ENCODE measurements at regions of chr13 and their contacts with region 1.

Region 1: DNA sequence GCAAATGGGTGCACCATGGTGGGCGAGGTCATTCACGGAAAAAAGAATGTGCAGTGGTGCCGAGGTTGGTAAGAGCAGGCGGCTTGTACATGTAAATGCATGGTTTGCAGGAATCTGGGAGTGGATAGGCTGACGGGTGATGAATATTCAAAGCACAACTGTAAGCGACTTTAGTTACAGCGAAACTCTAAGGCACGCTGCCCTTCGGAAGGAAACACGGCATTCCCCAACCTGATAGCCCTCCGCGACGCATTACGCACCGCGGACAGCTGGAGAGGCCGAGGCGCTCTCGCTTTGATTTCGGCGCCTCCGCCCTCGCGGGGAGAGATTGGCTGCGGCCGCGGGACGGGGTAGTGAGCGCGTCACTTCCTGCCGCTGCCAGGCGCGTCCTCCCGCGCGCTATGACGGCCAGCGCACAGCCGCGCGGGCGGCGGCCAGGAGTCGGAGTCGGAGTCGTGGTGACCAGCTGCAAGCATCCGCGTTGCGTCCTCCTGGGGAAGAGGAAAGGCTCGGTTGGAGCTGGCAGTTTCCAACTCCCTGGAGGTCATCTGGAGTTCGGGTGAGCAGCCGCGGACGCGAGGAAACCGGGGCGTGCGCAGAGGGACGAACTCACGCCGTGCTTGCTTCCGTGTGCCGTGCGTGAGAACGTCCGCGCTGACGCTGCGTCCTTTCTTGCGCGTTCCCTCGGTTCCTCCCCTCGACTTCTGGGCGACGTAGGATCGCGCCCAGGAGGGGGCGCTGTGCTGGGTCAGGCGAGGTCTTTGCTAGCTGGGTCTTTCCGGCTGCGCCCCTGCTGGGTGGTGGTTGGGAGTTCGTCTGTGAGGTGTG is at the start of gene NUDT15:
- DNase-seq: peak; percentile 96 to 97 (median 97)
- H3K4me3 ChIP-seq: peak within 1 kb of the TSS; percentile 83 to 87
- H3K4me3 Mint-ChIP-seq: peak within 1 kb of the TSS; percentile 87 to 96 (median 93)
- H3K27ac ChIP-seq: peak within 1 kb of the TSS; percentile 94
- H3K27ac Mint-ChIP-seq: peak within 1 kb of the TSS; percentile 95 to 99 (median 97)
- H3K4me1 ChIP-seq: peaks cover 24% of the 10 kb centered on the region
- H3K4me1 Mint-ChIP-seq: peaks cover 13 to 32% (median 27%) of the 10 kb centered on the region in 4 donors
- H3K27me3 ChIP-seq: no peaks in the 10 kb centered on the region
- H3K27me3 Mint-ChIP-seq: no peaks in the 10 kb centered on the region
- total RNA-seq, gene NUDT15: 5.6 to 6.3 TPM

Region 2: GRCh38 chr13:46553886-46554858 is 1483.4 kb before region 1 on chr13:
- CTCF ChIA-PET with region 1: no interaction called
- POLR2A ChIA-PET with region 1: no interaction called
- intact Hi-C with region 1: loop called (anchors 5 kb)
- DNase-seq: peak; percentile 70 to 85 (median 75)
- H3K4me3 ChIP-seq: peak overlapping the region; percentile 67 to 87
- H3K4me3 Mint-ChIP-seq: peak overlapping the region; percentile 94 to 98 (median 96)
- H3K27ac ChIP-seq: peak overlapping the region; percentile 79
- H3K27ac Mint-ChIP-seq: peak overlapping the region; percentile 92 to 97 (median 94)
- H3K4me1 ChIP-seq: peaks cover 38% of the 10 kb centered on the region
- H3K4me1 Mint-ChIP-seq: peaks cover 38 to 63% (median 45%) of the 10 kb centered on the region in 4 donors
- H3K27me3 ChIP-seq: no peaks in the 10 kb centered on the region
- H3K27me3 Mint-ChIP-seq: peaks cover under 1 to 1% of the 10 kb centered on the region in 2 donors

Region 3: GRCh38 chr13:48050550-48050949 is 13.0 kb after region 1 on chr13:
- CTCF ChIA-PET with region 1: interaction called, 49 read pairs
- POLR2A ChIA-PET with region 1: interaction called, 11 read pairs
- intact Hi-C with region 1: no loop called
- DNase-seq: no peak
- H3K4me3 ChIP-seq: no peak overlapping the region
- H3K4me3 Mint-ChIP-seq: no peak overlapping the region
- H3K27ac ChIP-seq: no peak overlapping the region
- H3K27ac Mint-ChIP-seq: peak overlapping the region in 4 of 7 donors; percentile 5 to 50 (median 23)
- H3K4me1 ChIP-seq: no peaks in the 10 kb centered on the region
- H3K4me1 Mint-ChIP-seq: no peaks in the 10 kb centered on the region
- H3K27me3 ChIP-seq: no peaks in the 10 kb centered on the region
- H3K27me3 Mint-ChIP-seq: no peaks in the 10 kb centered on the region

Region 4: DNA sequence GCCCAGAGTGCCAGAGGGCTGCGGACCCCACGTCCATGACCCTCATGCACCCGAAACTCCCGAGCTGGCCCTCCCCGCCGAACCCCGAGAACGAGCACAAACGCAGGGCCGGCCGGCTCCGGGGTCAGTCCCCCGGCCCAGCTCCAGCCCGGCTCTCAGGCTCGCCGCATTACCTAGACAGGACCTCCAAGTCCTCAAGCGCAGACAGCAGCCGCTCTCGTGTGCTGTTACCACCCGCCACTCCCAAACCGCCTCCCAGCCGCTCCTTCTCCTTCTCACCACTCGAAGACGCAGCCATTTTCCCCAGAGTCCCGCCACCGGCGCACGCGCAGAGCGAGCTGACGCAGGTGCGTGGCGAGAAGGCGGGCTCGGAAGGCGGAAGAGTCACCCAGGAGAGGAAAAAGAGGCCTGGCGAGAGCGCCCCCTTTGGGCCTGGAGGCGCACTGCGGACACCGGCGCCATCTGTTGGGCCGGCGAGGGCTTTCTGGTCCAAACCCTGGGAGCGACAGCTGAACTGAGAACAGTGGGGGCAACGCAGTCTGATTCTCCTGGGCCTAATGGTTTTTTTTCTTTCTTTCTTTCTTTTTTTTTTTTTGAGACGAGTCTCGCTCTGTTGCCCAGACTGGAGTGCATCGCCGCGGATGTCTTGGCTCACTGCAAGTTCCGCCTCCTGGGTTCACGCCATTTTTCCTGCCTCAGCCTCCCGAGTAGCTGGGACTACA is 57.4 kb after region 1 on chr13 and contains the start of gene MED4:
- CTCF ChIA-PET with region 1: interaction called, 25 read pairs
- POLR2A ChIA-PET with region 1: interaction called, 39 read pairs
- intact Hi-C with region 1: loop called (anchors 1 kb)
- DNase-seq: peak; percentile 95 to 98 (median 97)
- H3K4me3 ChIP-seq: peak within 1 kb of the TSS; percentile 73 to 76
- H3K4me3 Mint-ChIP-seq: peak within 1 kb of the TSS; percentile 93 to 98 (median 96)
- H3K27ac ChIP-seq: peak within 1 kb of the TSS; percentile 96
- H3K27ac Mint-ChIP-seq: peak within 1 kb of the TSS; percentile 92 to 99 (median 98)
- H3K4me1 ChIP-seq: peaks cover 37% of the 10 kb centered on the region
- H3K4me1 Mint-ChIP-seq: peaks cover 24 to 54% (median 35%) of the 10 kb centered on the region in 4 donors
- H3K27me3 ChIP-seq: no peaks in the 10 kb centered on the region
- H3K27me3 Mint-ChIP-seq: peaks cover 0 to 2% of the 10 kb centered on the region in 2 donors
- total RNA-seq, gene MED4: 50.6 to 53.5 TPM

Region 5: DNA sequence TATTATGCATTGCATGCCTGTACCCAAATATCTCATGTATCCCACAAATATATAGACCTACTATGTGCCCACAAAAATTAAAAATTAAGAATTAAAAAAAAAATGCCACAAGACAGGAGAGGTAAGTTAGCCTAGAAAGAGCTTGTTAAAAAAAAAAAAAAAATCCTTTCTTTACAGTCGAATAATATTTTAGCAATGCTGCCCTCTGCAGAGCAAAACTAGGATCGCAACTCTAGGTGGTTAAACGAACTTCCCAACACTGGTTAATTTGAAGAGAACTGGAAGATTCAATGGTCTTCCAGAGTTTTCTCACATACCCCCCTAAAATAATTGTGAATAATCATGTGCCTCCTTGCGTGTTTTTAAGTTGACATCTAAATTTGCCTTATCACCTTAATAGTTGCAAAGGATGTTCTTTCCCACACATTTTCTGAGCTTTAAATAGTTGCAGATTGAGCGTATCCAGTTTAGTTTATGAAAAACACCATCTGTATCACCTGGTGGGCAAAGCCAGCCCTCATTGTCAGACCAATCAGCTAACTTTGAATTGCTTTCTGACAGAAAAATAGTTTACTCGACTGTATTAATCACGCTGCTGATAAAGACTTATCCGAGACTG is 542.7 kb after region 1 on chr13:
- CTCF ChIA-PET with region 1: no interaction called
- POLR2A ChIA-PET with region 1: no interaction called
- intact Hi-C with region 1: loop called (anchors 10 kb)
- DNase-seq: peak; percentile 64 to 74 (median 70)
- H3K4me3 ChIP-seq: no peak overlapping the region
- H3K4me3 Mint-ChIP-seq: peak overlapping the region in 1 of 8 donors; percentile 31
- H3K27ac ChIP-seq: no peak overlapping the region
- H3K27ac Mint-ChIP-seq: peak overlapping the region in 2 of 7 donors; percentile 0 to 43
- H3K4me1 ChIP-seq: peaks cover 19% of the 10 kb centered on the region
- H3K4me1 Mint-ChIP-seq: peaks cover 4 to 28% (median 13%) of the 10 kb centered on the region in 4 donors
- H3K27me3 ChIP-seq: no peaks in the 10 kb centered on the region
- H3K27me3 Mint-ChIP-seq: peaks cover 0 to 4% of the 10 kb centered on the region in 2 donors

Region 6: DNA sequence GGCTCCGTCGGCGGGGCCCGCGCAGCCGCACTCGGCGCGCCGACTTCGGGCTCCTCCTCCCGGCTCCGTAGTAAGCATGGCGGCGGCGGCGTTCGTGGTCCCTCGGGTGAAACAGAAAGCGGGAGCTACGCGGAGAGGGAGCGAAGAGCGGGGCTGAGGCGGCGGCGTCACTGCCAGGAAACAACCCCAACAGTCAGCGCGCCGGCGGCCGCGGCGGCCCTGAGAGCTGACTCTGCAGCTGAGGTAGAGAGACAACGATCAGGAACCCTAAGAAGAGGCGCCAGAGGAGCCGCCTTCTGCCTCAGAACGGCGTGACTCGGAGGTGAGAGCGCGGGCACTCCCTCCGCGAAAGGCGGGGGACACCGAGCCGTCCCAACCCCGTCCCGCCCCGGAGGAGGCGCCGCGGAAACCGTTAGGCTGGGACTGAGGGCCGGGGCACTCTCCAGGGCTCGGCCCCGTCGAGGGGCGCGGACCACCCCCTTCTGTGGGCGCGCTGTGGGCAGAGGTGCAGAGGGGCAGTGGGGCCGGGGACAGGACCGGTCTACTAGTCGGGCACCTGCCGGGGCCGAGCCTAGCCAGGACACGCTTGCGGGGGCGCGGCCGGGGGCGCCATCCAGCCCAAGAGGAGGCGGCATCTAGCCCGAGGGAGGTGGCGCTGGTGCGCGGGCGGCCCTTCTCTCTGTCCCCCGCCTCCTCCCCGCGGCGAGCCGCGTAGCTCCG is 938.5 kb after region 1 on chr13 and contains the start of gene FNDC3A:
- CTCF ChIA-PET with region 1: no interaction called
- POLR2A ChIA-PET with region 1: interaction called, 6 read pairs
- intact Hi-C with region 1: loop called (anchors 5 kb)
- DNase-seq: peak; percentile 88 to 92 (median 89)
- H3K4me3 ChIP-seq: peak within 1 kb of the TSS; percentile 81 to 83
- H3K4me3 Mint-ChIP-seq: peak within 1 kb of the TSS; percentile 94 to 98 (median 96)
- H3K27ac ChIP-seq: peak within 1 kb of the TSS; percentile 90
- H3K27ac Mint-ChIP-seq: peak within 1 kb of the TSS; percentile 90 to 99 (median 99)
- H3K4me1 ChIP-seq: peaks cover 51% of the 10 kb centered on the region
- H3K4me1 Mint-ChIP-seq: peaks cover 28 to 55% (median 40%) of the 10 kb centered on the region in 4 donors
- H3K27me3 ChIP-seq: no peaks in the 10 kb centered on the region
- H3K27me3 Mint-ChIP-seq: peaks cover 0 to 3% of the 10 kb centered on the region in 2 donors
- total RNA-seq, gene FNDC3A: 43.7 to 44.4 TPM

Region 7: GRCh38 chr13:49936085-49936940 is 1898.8 kb after region 1 on chr13 and contains the start of gene SPRYD7:
- CTCF ChIA-PET with region 1: no interaction called
- POLR2A ChIA-PET with region 1: no interaction called
- intact Hi-C with region 1: loop called (anchors 10 kb)
- DNase-seq: peak; percentile 89 to 92 (median 92)
- H3K4me3 ChIP-seq: peak within 1 kb of the TSS; percentile 66 to 96
- H3K4me3 Mint-ChIP-seq: peak within 1 kb of the TSS; percentile 91 to 97 (median 95)
- H3K27ac ChIP-seq: peak within 1 kb of the TSS; percentile 63
- H3K27ac Mint-ChIP-seq: peak within 1 kb of the TSS; percentile 85 to 97 (median 94)
- H3K4me1 ChIP-seq: peaks cover 19% of the 10 kb centered on the region
- H3K4me1 Mint-ChIP-seq: peaks cover 12 to 23% (median 15%) of the 10 kb centered on the region in 4 donors
- H3K27me3 ChIP-seq: no peaks in the 10 kb centered on the region
- H3K27me3 Mint-ChIP-seq: no peaks in the 10 kb centered on the region
- total RNA-seq, gene SPRYD7: 3.3 to 5.1 TPM